Heart left ventricle (tissue), 16 donors: ENCODE measurements at regions of chr15 and their contacts with region 1.

Region 1: GRCh38 chr15:31925541-31925940 is 104.8 kb upstream of the CHRNA7 start:
- DNase-seq: no peak
- ATAC-seq: no peak
- H3K4me3 ChIP-seq: no peak overlapping the region
- H3K27ac ChIP-seq: no peak overlapping the region
- H3K4me1 ChIP-seq: no peaks in the 10 kb centered on the region
- H3K27me3 ChIP-seq: peaks cover 0 to 2% (median 0%) of the 10 kb centered on the region in 9 donors
- CTCF ChIP-seq: no peak
- POLR2A ChIP-seq: no peak

Region 2: DNA sequence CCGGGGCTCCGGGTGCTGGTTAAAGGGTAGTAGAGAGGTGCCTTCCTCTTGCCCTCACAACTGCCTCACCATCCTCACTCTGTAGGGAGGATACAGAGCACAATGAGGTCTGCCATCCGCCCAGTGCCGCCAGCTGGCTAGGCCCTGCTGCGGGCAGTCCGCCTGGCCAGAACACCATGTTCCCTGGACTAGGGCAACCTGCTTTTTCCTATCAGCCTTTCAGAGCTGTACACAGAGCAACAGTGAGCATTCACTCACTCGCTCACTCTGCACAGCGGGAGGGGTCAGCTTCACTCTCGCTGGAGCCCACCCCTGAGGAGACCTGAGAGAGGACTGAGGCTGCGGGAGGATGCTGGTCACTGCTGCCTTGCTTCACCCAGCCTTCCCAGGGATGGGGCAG is 113.9 kb before region 1 on chr15:
- intact Hi-C with region 1: no loop called
- DNase-seq: no peak
- ATAC-seq: peak in 3 of 4 donors; percentile 53 to 71 (median 68)
- H3K4me3 ChIP-seq: no peak overlapping the region
- H3K27ac ChIP-seq: no peak overlapping the region
- H3K4me1 ChIP-seq: no peaks in the 10 kb centered on the region
- H3K27me3 ChIP-seq: no peaks in the 10 kb centered on the region
- CTCF ChIP-seq: no peak
- POLR2A ChIP-seq: no peak

Region 3: DNA sequence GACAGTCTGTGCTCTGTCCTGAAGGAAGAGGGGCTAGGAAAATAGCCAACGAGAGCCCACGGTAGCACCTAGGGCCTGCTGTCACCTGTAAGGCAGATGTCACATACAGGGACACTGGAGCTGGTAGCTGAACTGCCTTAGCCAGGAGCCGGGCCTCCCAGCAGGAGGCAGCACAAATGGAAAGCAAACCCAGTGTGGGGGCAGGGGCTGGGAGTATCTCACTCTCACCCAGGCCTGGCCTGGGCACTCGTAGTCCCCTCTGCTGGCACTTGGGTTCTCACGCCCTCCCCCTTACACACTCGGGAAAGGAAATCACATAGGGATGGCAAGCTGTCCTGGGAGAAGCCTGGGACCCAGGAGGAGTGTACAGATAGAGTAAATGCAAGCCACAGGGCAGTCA is 68.3 kb before region 1 on chr15:
- intact Hi-C with region 1: no loop called
- DNase-seq: no peak
- ATAC-seq: peak in 1 of 4 donors; percentile 26
- H3K4me3 ChIP-seq: no peak overlapping the region
- H3K27ac ChIP-seq: no peak overlapping the region
- H3K4me1 ChIP-seq: no peaks in the 10 kb centered on the region
- H3K27me3 ChIP-seq: no peaks in the 10 kb centered on the region
- CTCF ChIP-seq: no peak
- POLR2A ChIP-seq: no peak

Region 4: GRCh38 chr15:32104061-32104995 is 178.8 kb after region 1 on chr15:
- intact Hi-C with region 1: loop called in 1 of 10 experiments (anchors 5 kb)
- DNase-seq: no peak
- ATAC-seq: peak in 1 of 4 donors; percentile 25
- H3K4me3 ChIP-seq: no peak overlapping the region
- H3K27ac ChIP-seq: no peak overlapping the region
- H3K4me1 ChIP-seq: peaks cover 0 to 16% (median 6%) of the 10 kb centered on the region in 12 donors
- H3K27me3 ChIP-seq: no peaks in the 10 kb centered on the region
- CTCF ChIP-seq: no peak
- POLR2A ChIP-seq: no peak